Ascending aorta (tissue), 2 donors: ENCODE measurements at regions of chr20 and their contacts with region 1.

Region 1: GRCh38 chr20:20083807-20084206 is 31.5 kb downstream of the CFAP61 start:
- DNase-seq: no peak
- H3K4me3 ChIP-seq: no peak overlapping the region
- H3K27ac ChIP-seq: peak overlapping the region; percentile 82
- H3K4me1 ChIP-seq: peaks cover 5 to 17% of the 10 kb centered on the region in 2 donors
- H3K27me3 ChIP-seq: no peaks in the 10 kb centered on the region
- CTCF ChIP-seq: peak; percentile 36 to 64 (median 47)

Region 2: GRCh38 chr20:18928626-18929025 is 1155.2 kb before region 1 on chr20:
- intact Hi-C with region 1: no loop called
- DNase-seq: no peak
- H3K4me3 ChIP-seq: no peak overlapping the region
- H3K27ac ChIP-seq: no peak overlapping the region
- H3K4me1 ChIP-seq: no peaks in the 10 kb centered on the region
- H3K27me3 ChIP-seq: no peaks in the 10 kb centered on the region
- CTCF ChIP-seq: no peak

Region 3: GRCh38 chr20:20138301-20139064 is 54.7 kb after region 1 on chr20:
- intact Hi-C with region 1: loop called (anchors 2 kb)
- DNase-seq: no peak
- H3K4me3 ChIP-seq: no peak overlapping the region
- H3K27ac ChIP-seq: no peak overlapping the region
- H3K4me1 ChIP-seq: no peaks in the 10 kb centered on the region
- H3K27me3 ChIP-seq: no peaks in the 10 kb centered on the region
- CTCF ChIP-seq: no peak

Region 4: DNA sequence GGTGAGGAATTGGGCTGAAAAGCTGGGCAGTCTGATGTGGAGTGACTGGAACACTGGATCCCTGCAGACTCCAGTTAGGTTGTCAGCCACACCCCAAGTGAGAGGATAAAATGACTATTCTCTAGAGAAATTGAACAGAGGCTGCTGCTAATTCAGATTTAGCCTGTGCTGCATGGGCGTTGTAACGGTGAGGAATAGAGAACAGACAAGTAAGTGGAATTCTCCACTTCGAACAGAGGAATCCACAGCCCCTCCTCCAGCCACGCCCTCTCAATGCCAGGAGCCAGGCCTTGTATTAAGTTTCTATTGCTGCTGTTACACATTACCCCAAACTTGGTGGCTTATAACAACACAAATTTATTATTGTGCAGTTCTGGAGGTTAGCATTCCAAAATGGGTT is 77.8 kb after region 1 on chr20:
- intact Hi-C with region 1: no loop called
- DNase-seq: no peak
- H3K4me3 ChIP-seq: no peak overlapping the region
- H3K27ac ChIP-seq: no peak overlapping the region
- H3K4me1 ChIP-seq: no peaks in the 10 kb centered on the region
- H3K27me3 ChIP-seq: no peaks in the 10 kb centered on the region
- CTCF ChIP-seq: no peak

Region 5: GRCh38 chr20:20237093-20237959 is 153.5 kb after region 1 on chr20:
- intact Hi-C with region 1: loop called (anchors 1 kb)
- DNase-seq: peak in 1 of 2 donors; percentile 66
- H3K4me3 ChIP-seq: no peak overlapping the region
- H3K27ac ChIP-seq: no peak overlapping the region
- H3K4me1 ChIP-seq: no peaks in the 10 kb centered on the region
- H3K27me3 ChIP-seq: no peaks in the 10 kb centered on the region
- CTCF ChIP-seq: peak; percentile 41 to 64 (median 58)

Region 6: GRCh38 chr20:20360464-20360863 is 276.7 kb after region 1 on chr20:
- intact Hi-C with region 1: loop called (anchors 10 kb)
- DNase-seq: no peak
- H3K4me3 ChIP-seq: no peak overlapping the region
- H3K27ac ChIP-seq: no peak overlapping the region
- H3K4me1 ChIP-seq: peaks cover 0 to 2% of the 10 kb centered on the region in 2 donors
- H3K27me3 ChIP-seq: peaks cover 13% of the 10 kb centered on the region
- CTCF ChIP-seq: peak; percentile 39 to 64 (median 62)

Region 7: GRCh38 chr20:20568604-20569205 is 484.9 kb after region 1 on chr20:
- intact Hi-C with region 1: loop called (anchors 5 kb)
- DNase-seq: no peak
- H3K4me3 ChIP-seq: no peak overlapping the region
- H3K27ac ChIP-seq: no peak overlapping the region
- H3K4me1 ChIP-seq: no peaks in the 10 kb centered on the region
- H3K27me3 ChIP-seq: no peaks in the 10 kb centered on the region
- CTCF ChIP-seq: peak; percentile 11 to 50 (median 43)